Right cardiac atrium (tissue), 5 donors: ENCODE measurements at regions of chr14 and their contacts with region 1.

Region 1: DNA sequence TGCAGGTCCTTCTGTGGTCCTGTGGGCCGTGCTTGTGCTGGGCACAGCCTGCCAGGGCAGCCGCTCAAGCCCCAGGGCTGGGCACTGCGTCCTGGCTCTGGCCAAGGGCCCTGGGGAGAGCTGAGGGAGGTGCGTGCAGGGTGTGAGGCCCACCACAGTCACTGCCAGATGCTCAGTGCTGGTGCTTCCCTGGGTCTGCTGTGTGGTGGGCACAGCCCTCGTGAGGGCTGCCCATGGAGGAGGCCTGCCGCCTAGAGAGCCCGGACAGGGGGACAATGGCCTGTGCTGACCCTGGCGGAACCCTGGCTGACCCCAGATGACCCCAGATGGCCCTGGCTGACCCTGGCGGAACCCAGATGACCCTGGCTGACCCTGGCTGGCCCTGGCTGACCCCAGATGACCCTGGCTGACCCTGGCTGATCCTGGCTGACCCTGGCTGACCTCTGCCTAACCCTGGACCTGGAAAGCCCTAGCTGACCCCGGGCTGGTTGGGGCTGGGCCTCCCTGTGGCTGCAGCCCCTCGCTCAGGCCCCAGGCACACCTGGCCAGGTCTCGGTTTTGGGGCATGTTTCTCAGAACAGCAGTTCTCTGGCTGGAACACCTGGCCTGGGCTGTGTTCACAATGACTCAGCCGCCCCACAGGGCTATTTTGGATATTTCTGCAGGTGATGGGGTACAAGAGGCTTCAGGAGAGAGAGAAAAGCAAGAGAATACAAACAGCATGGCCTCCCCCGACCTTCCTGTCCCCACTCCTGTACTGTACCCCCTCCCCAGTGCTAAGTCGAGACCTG is 55.4 kb downstream of the TMEM121 start:
- DNase-seq: peak in 1 of 3 donors; percentile 35
- ATAC-seq: no peak
- H3K4me3 ChIP-seq: no peak overlapping the region
- H3K27ac ChIP-seq: no peak overlapping the region
- H3K4me1 ChIP-seq: no peaks in the 10 kb centered on the region
- H3K27me3 ChIP-seq: no peaks in the 10 kb centered on the region

Region 2: DNA sequence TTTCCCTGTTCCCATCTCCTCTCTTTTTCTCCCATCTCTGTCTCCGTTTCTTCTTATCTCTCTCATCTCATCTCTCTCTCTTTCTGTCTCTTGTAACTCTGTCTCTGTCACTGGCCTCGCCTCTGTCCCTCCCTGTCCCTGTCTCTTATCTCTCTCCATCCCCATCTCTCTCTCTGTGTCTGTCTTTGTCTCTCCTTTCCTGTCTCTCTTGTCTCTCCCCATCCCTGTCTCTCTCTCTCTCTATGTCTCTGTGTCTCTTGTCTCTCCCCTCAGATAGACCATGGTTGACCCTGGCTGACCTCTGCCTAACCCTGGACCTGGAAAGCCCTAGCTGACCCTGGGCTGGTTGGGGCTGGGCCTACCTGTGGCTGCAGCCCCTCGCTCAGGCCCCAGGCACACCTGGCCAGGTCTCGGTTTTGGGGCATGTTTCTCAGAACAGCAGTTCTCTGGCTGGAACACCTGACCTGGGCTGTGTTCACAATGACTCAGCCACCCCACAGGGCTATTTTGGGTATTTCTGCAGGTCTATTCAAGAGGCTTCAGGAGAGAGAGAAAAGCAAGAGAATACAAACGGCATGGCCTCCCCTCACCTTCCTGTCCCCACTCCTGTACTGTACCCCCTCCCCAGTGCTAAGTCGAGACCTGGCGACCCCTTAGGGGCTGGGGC is 119.0 kb after region 1 on chr14:
- intact Hi-C with region 1: loop called in 3 of 4 experiments (anchors 2 to 5 kb)
- DNase-seq: no peak
- ATAC-seq: no peak
- H3K4me3 ChIP-seq: no peak overlapping the region
- H3K27ac ChIP-seq: no peak overlapping the region
- H3K4me1 ChIP-seq: no peaks in the 10 kb centered on the region
- H3K27me3 ChIP-seq: no peaks in the 10 kb centered on the region